ENCODE measurements at regions of chr5 and their contacts with region 1.

Region 1: GRCh38 chr5:168679515-168679920 is 100.3 kb upstream of the PANK3 start:
- DNase-seq: peak; percentile 75
- H3K4me3 Mint-ChIP-seq: no peak overlapping the region
- H3K27ac Mint-ChIP-seq: no peak overlapping the region
- H3K4me1 Mint-ChIP-seq: peaks cover 11% of the 10 kb centered on the region
- H3K27me3 Mint-ChIP-seq: no peaks in the 10 kb centered on the region

Region 2: GRCh38 chr5:168579488-168580226 is 99.9 kb before region 1 on chr5:
- CTCF ChIA-PET with region 1: no interaction called
- POLR2A ChIA-PET with region 1: no interaction called
- intact Hi-C with region 1: no loop called
- DNase-seq: peak; percentile 99
- H3K4me3 Mint-ChIP-seq: peak overlapping the region; percentile 81
- H3K27ac Mint-ChIP-seq: peak overlapping the region; percentile 96
- H3K4me1 Mint-ChIP-seq: peaks cover 34% of the 10 kb centered on the region
- H3K27me3 Mint-ChIP-seq: no peaks in the 10 kb centered on the region

Region 3: DNA sequence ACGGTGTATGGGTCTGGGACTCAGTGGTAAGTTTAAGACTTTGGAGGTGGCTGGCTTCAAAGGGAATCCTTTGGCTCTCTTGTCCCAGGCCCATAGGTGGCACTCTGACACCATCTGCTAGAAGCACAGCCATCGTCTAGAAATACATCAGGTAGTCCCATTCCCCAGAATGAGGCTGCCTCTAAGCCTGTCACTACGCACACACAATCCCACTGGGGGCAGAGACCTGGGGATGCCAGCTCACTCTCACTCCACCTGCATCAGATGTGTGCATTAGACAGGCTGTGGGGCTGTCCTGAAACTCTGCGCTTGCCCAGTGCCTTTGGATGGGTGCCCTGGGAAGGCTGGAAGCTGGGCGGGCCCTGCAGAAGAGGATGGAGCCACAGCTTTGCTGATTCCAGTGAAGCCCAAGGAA is 27.1 kb after region 1 on chr5:
- CTCF ChIA-PET with region 1: no interaction called
- POLR2A ChIA-PET with region 1: no interaction called
- intact Hi-C with region 1: no loop called
- DNase-seq: peak; percentile 49
- H3K4me3 Mint-ChIP-seq: no peak overlapping the region
- H3K27ac Mint-ChIP-seq: no peak overlapping the region
- H3K4me1 Mint-ChIP-seq: no peaks in the 10 kb centered on the region
- H3K27me3 Mint-ChIP-seq: peaks cover 1% of the 10 kb centered on the region

Region 4: GRCh38 chr5:168947212-168947868 is 267.8 kb after region 1 on chr5:
- CTCF ChIA-PET with region 1: interaction called, 5 read pairs
- POLR2A ChIA-PET with region 1: no interaction called
- intact Hi-C with region 1: loop called (anchors 2 kb)
- DNase-seq: peak; percentile 57
- H3K4me3 Mint-ChIP-seq: no peak overlapping the region
- H3K27ac Mint-ChIP-seq: no peak overlapping the region
- H3K4me1 Mint-ChIP-seq: peaks cover 13% of the 10 kb centered on the region
- H3K27me3 Mint-ChIP-seq: no peaks in the 10 kb centered on the region

Region 5: DNA sequence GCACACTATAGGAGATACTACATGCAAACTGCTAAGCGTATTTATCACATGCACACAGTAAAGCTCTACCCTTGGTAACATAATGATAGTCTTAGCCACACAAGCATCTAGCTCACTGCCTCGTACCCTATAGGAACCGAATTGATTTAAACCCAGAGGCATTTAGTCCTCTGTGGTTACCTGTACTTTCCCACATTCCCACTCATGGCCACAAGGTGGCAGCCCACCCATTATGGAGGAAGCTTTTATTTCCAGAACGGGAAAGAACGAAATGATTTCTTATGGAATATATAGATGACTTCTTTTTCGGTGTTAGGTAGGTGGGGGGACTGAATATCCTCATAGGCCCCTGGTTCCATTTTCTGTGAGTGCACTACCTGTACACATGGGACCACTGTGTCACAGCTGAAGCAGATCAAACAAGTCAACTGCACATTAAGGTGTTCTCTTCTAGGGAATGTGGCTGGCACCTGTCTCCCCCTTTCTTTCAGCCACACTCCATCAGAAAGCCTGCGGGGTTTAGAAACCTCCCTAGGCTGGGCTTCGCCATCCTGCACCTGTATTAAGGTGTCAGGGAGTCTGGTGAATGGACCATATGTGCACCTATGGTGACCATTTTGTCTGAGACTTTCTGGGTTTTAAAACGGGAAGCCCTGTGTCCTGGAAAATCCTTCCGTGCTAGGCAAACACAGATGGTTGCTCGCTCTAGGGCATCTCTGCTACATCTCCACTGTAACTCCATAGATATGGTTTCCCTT is 308.2 kb after region 1 on chr5:
- CTCF ChIA-PET with region 1: interaction called, 9 read pairs
- POLR2A ChIA-PET with region 1: no interaction called
- intact Hi-C with region 1: loop called (anchors 5 kb)
- DNase-seq: peak; percentile 69
- H3K4me3 Mint-ChIP-seq: no peak overlapping the region
- H3K27ac Mint-ChIP-seq: no peak overlapping the region
- H3K4me1 Mint-ChIP-seq: no peaks in the 10 kb centered on the region
- H3K27me3 Mint-ChIP-seq: peaks cover 6% of the 10 kb centered on the region

Region 6: GRCh38 chr5:169302491-169303118 is 623.1 kb after region 1 on chr5:
- CTCF ChIA-PET with region 1: no interaction called
- POLR2A ChIA-PET with region 1: no interaction called
- intact Hi-C with region 1: loop called (anchors 1 kb)
- DNase-seq: peak; percentile 72
- H3K4me3 Mint-ChIP-seq: no peak overlapping the region
- H3K27ac Mint-ChIP-seq: no peak overlapping the region
- H3K4me1 Mint-ChIP-seq: peaks cover 14% of the 10 kb centered on the region
- H3K27me3 Mint-ChIP-seq: peaks cover 56% of the 10 kb centered on the region

Measured in activated CD4-positive, alpha-beta memory T cell treated with anti-CD3 and anti-CD28 coated beads for 36 hours (primary cell).